Common myeloid progenitor, CD34-positive (primary cell): ENCODE measurements at regions of chr1 and their contacts with region 1.

Region 1: DNA sequence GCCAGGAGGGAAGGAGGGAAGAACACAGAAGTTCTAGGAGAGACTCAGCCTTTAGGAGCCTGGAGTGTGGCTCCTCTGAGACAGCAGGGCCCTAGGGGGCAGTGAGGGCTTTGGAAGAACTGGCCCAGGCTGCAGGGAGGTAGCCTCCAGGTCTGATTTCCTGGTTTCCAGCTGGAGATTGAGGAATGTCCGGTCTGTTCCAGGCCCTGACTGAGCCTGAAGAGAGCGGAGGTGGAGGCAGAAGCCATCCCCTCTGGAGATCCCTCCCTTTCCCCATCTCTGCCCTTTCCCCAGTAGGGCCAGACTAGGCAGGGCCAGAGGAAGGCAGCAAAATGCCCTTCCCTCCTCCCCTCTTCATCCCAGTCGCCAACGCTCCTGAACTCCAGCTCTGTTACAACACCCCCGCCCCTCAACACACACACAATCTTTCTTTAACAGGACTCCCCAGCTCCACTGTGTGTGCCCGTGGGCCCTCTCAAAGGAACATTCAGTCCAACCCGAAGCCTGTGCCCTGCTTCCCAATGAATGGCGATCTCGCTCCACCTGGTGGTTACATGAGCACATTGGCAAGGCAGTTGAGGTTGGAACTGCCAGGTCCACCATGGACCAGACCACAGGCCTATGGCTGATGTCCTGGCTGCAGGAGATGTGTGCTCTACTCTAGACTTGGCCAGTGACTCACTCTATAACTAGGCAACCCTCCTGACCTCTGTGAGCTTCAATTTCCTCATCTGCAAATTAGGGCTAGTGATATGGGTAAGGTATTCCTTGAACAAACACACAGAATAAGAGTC is 32.0 kb downstream of the MAP7D1 start:
- DNase-seq: peak; percentile 85 to 93 (median 90)
- H3K4me3 ChIP-seq: no peak overlapping the region
- H3K27ac ChIP-seq: peak overlapping the region in 1 of 2 experiments; percentile 27
- H3K4me1 ChIP-seq: peaks cover 0 to 4% (median 4%) of the 10 kb centered on the region in 4 experiments
- H3K27me3 ChIP-seq: no peaks in the 10 kb centered on the region

Region 2: DNA sequence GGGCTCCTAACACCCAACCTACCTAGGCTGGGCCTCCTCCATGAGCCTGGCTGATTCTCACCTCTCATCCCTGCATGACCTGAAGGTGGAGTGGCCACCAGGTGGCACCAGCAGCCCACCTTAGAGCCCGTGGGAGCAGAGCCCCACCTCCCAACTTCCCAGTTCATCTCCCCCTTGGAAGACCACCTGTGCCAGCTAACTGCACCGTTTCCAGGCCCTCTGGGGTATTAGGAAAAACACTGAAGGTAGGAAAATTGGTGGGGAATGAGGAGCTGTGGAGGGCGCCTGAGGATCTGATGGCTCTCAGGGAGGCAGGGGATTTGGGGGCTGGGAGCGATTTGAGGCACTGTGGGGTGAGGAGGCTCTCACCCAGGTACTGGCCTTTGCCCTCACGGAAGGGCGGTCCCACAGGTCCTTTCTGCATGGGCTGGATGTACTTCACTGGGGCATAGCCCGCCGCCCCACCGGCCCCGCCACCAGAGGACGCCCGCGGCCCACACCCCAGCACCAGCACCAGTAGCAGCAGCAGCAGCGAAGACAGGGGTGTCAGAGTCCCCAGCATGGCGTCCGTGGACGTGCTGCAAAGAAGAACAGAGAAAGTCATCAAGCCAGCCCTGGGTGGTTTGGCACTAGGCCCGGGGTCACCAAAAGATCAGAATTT is 88.2 kb before region 1 on chr1:
- CTCF ChIA-PET with region 1: interaction called, 45 read pairs
- POLR2A ChIA-PET with region 1: no interaction called
- DNase-seq: peak; percentile 63 to 76 (median 75)
- H3K4me3 ChIP-seq: peak overlapping the region in 3 of 7 experiments; percentile 19 to 66 (median 35)
- H3K27ac ChIP-seq: no peak overlapping the region
- H3K4me1 ChIP-seq: peaks cover 0 to 20% (median 13%) of the 10 kb centered on the region in 4 experiments
- H3K27me3 ChIP-seq: no peaks in the 10 kb centered on the region

Region 3: GRCh38 chr1:36134505-36135329 is 53.3 kb before region 1 on chr1:
- CTCF ChIA-PET with region 1: interaction called, 33 read pairs
- POLR2A ChIA-PET with region 1: no interaction called
- DNase-seq: peak in 2 of 3 donors; percentile 58 to 60
- H3K4me3 ChIP-seq: no peak overlapping the region
- H3K27ac ChIP-seq: no peak overlapping the region
- H3K4me1 ChIP-seq: peaks cover 0 to 2% (median 0%) of the 10 kb centered on the region in 4 experiments
- H3K27me3 ChIP-seq: no peaks in the 10 kb centered on the region

Region 4: DNA sequence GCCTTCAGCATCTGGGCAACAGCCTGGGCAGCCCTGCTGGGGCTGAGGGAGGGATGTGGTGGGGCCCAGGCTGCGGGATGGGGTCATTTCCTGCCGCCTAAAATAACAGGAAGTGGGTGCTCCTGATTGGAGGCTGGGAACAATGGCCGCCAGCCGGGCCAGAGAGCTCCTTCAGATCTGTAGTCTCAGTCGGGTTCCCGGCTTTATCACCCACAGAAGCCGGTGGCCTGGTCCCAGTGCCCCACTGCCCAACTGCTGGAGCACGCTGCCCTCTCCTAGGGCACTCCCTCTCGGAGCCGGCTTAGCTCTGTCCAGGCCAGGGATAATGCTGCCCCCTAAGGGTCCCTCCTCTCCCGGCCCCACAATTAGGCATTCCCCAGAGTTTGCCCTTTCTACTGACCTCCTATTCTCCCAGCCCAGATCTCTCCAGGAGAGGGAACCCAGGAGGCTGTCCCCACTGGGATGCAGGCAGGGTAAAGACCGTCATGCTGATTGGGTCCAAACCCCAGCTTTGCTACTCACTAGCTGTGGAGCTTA is 27.0 kb before region 1 on chr1:
- CTCF ChIA-PET with region 1: interaction called, 134 read pairs
- POLR2A ChIA-PET with region 1: interaction called, 4 read pairs
- DNase-seq: peak; percentile 64 to 91 (median 89)
- H3K4me3 ChIP-seq: peak overlapping the region in 6 of 7 experiments; percentile 52 to 66 (median 62)
- H3K27ac ChIP-seq: peak overlapping the region; percentile 77 to 86
- H3K4me1 ChIP-seq: peaks cover 21 to 62% (median 57%) of the 10 kb centered on the region in 4 experiments
- H3K27me3 ChIP-seq: no peaks in the 10 kb centered on the region

Region 5: GRCh38 chr1:36166938-36167910 is 20.8 kb before region 1 on chr1:
- CTCF ChIA-PET with region 1: interaction called, 42 read pairs
- POLR2A ChIA-PET with region 1: interaction called, 4 read pairs
- DNase-seq: no peak
- H3K4me3 ChIP-seq: no peak overlapping the region
- H3K27ac ChIP-seq: peak overlapping the region in 1 of 2 experiments; percentile 48
- H3K4me1 ChIP-seq: peaks cover 0 to 12% (median 8%) of the 10 kb centered on the region in 4 experiments
- H3K27me3 ChIP-seq: no peaks in the 10 kb centered on the region

Region 6: DNA sequence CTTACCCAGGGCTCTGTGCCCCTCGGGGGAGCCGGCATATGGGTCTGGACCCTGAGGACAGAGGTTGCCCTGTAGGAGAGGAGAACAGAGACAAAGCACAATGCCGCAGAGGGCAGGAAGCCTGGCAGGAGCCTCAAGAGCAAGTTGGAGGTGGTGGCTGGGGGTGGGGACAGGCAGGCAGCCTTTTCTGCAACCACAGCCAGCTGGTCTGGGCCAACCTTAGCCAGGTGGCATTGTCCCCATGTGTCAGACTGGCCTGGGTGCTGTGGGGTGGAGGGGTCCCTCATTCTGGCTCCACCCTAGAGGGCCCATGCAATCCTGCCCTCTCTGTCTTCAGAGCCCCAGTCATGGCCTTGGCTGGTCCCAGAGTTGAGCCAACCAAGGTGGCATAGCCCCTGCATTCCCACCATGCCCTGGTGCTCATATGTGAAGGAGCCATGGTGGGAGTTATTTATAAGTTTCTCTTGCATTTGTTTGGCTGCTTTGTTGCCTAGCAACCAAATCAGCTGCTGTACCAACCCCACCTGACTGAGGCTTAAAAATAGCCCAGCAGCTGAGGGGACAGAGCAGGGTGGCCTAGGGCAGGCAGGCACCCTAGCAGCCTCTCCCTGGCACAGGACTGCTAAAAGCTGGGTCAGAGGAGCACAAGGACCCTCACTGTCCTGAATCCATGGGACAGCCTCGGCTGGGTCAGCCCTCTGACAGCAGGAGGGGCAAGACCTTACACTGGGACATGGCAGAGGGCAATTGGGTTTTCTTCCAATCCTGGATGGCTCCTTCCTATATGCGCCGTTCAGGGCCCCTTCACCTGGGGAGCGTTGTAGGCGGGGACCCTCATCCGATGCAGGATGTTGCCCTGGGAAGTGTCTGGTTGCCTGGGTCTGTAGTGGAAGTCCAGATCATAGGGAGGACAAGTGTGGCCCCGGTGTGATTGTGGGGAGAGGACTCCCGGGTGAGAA is 12.6 kb before region 1 on chr1:
- CTCF ChIA-PET with region 1: interaction called, 15 read pairs
- POLR2A ChIA-PET with region 1: no interaction called
- DNase-seq: peak in 2 of 3 donors; percentile 51 to 65
- H3K4me3 ChIP-seq: no peak overlapping the region
- H3K27ac ChIP-seq: peak overlapping the region in 1 of 2 experiments; percentile 68
- H3K4me1 ChIP-seq: peaks cover 0 to 5% (median 3%) of the 10 kb centered on the region in 4 experiments
- H3K27me3 ChIP-seq: no peaks in the 10 kb centered on the region

Region 7: DNA sequence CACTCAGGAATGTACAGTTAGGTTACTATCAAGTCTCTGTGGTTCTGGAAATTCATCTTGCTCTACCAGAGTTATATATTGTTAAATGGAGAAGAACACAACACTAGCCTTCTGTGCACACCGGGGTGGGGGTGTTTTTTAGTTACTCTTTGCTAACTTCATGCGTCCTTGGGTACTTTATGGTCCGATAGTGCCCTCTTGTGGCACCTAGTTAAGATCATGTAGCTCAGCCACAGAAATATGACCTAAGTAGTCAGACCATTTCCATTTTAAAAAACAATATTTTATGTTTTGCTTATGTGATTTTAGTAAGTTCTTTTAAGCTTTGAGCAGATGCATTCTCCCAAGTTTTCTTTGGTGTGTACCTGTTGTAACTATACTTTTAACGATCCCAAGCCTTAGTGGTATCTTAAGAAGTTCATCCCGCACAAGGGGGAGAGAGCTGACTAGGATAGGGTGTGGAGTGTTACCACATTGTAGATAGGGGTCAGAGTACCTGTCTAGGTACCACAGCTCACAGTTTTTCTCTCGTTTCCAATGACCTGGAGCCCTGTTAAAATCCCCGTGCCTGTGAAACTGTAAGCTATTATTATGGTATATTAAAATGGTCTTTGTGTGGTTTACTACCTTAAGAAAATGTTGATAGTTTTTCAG is 97.6 kb after region 1 on chr1:
- CTCF ChIA-PET with region 1: interaction called, 21 read pairs
- POLR2A ChIA-PET with region 1: no interaction called
- DNase-seq: peak; percentile 90 to 97 (median 93)
- H3K4me3 ChIP-seq: no peak overlapping the region
- H3K27ac ChIP-seq: no peak overlapping the region
- H3K4me1 ChIP-seq: peaks cover 0 to 2% (median 0%) of the 10 kb centered on the region in 4 experiments
- H3K27me3 ChIP-seq: no peaks in the 10 kb centered on the region

Region 8: DNA sequence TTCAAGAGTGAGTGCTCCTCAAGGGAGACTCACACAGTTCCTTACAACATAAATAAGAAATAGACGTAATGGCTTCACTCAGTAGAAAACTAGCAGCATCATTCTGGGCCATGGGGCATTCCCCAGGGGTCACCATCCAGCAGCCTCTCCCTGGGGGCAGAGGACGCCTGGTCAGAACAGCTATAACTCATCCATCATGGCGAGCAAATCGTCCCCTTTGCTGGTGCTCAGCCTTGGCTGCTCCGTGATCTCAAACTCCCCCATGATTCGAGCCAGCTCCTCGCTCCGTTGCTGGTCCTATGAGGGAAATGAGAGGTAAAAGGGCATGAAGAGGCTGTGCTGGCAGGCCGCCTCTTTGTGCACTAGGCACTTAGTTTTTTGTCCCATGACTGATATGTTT is 230.0 kb after region 1 on chr1:
- CTCF ChIA-PET with region 1: no interaction called
- POLR2A ChIA-PET with region 1: no interaction called
- DNase-seq: no peak
- H3K4me3 ChIP-seq: no peak overlapping the region
- H3K27ac ChIP-seq: no peak overlapping the region
- H3K4me1 ChIP-seq: peaks cover 0 to 6% (median 5%) of the 10 kb centered on the region in 4 experiments
- H3K27me3 ChIP-seq: no peaks in the 10 kb centered on the region